ENCODE measurements at regions of chr14 and their contacts with region 1.

Region 1: DNA sequence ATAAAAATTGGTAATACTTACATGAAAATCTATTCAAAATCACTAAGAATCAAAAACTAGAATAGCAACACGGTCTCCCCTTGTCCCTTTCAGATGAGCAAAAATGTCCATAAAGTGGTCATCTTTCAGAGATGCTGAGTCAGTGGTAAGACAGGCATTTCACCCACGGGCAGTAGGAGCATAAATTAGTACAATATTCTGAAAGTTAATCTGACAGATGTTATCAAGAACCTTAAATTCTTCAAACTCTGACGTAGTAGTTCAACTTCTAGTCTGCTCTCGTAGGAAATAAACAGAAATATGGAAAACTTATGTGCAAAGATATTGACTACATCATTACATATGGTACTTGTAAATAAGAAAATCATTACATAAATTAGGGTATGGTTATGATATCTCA is 33.1 kb upstream of the GNPNAT1 start:
- DNase-seq: no peak

Region 2: GRCh38 chr14:52840916-52841315 is 16.4 kb after region 1 on chr14:
- intact Hi-C with region 1: no loop called
- DNase-seq: no peak

Region 3: GRCh38 chr14:52895000-52895399 is 70.5 kb after region 1 on chr14:
- intact Hi-C with region 1: no loop called
- DNase-seq: no peak

Region 4: DNA sequence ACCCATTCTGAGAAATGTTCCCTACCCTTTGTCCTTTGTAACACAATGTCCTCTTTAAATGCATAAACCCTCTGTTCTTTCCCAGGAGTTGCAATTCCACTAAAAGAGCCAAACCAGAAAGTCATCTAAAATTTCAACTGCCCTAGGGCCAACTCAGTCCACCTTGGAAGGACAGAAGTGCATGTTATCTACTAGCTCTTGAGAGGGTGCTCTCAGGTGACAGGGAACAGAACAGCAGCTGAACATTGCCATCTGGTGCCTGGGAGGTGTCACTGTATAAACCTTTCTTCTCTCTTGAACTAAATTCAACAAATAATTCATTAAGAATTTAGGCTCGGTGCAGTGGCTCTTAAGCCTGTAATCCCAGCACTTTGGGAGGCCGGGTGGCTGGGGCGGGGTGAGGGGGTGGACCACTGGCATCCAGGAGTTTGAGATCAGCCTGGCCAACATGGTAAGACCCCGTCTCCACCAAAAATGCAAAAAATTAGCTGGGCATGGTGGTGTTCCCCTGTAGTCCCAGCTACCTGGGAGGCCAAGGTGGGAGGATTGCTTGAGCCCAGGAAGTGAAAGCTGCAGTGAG is 136.6 kb after region 1 on chr14:
- intact Hi-C with region 1: loop called (anchors 2 kb)
- DNase-seq: no peak

Region 5: GRCh38 chr14:53055003-53055402 is 230.5 kb after region 1 on chr14:
- intact Hi-C with region 1: loop called (anchors 5 kb)
- DNase-seq: no peak

Region 6: GRCh38 chr14:53306267-53306721 is 481.8 kb after region 1 on chr14:
- intact Hi-C with region 1: loop called (anchors 5 kb)
- DNase-seq: no peak

Measured in cardiac septum (tissue), 1 donor.